ENCODE measurements at regions of chr17 and their contacts with region 1.

Region 1: DNA sequence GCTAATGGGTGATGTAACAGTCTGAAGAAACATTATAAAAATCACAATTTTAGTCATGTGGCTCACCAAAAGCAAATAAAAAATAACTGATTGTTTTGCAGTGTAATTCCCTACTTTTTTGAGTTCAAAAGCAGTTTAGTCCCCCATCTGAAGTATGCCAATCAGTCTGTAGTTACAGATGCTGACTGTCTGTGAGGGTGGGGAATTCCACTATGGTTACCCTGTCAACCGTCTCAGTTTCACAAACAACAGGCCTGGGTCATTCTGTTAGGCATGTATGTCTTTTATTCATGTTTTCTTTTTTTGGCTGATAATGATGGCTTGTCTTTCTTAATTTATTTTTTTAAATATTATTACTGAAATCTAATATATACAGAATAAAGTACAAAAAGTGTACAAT is 69.3 kb downstream of the STXBP4 start:
- DNase-seq: peak in 1 of 9 donors; percentile 32
- ATAC-seq: no peak
- H3K4me3 ChIP-seq: no peak overlapping the region
- H3K4me3 Mint-ChIP-seq: no peak overlapping the region
- H3K27ac ChIP-seq: no peak overlapping the region
- H3K27ac Mint-ChIP-seq: peak overlapping the region in 1 of 9 donors; percentile 25
- H3K4me1 ChIP-seq: no peaks in the 10 kb centered on the region
- H3K4me1 Mint-ChIP-seq: peaks cover 0 to 22% (median 0%) of the 10 kb centered on the region in 7 donors
- H3K27me3 ChIP-seq: no peaks in the 10 kb centered on the region
- H3K27me3 Mint-ChIP-seq: no peaks in the 10 kb centered on the region

Region 2: DNA sequence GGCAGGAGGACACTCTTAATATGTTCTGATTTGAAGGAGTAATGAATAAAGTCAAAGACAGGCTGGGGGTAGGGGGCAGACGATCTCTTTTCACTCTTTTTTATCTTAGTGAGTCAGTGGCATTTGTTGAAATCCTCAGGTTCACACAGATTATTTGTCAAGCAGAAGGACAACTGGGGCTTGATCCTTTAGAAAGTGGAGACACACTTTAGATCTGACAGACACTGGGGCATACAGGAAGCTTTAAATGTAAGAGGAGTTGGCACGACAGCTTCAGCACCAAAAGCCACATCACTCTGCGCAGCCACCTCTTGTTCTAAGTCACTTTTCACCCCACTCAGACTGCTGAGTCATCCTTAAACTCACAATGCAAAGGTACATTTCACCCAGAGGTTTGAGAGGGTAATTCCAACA is 52.3 kb after region 1 on chr17:
- CTCF ChIA-PET with region 1: no interaction called
- POLR2A ChIA-PET with region 1: no interaction called
- intact Hi-C with region 1: loop called in 1 of 2 experiments (anchors 5 kb)
- DNase-seq: peak in 1 of 9 donors; percentile 22
- ATAC-seq: peak; percentile 58
- H3K4me3 ChIP-seq: no peak overlapping the region
- H3K4me3 Mint-ChIP-seq: peak overlapping the region in 1 of 10 donors; percentile 47
- H3K27ac ChIP-seq: no peak overlapping the region
- H3K27ac Mint-ChIP-seq: peak overlapping the region in 2 of 9 donors; percentile 41 to 87
- H3K4me1 ChIP-seq: peaks cover 0 to 25% of the 10 kb centered on the region in 2 donors
- H3K4me1 Mint-ChIP-seq: peaks cover 0 to 22% (median 0%) of the 10 kb centered on the region in 7 donors
- H3K27me3 ChIP-seq: no peaks in the 10 kb centered on the region
- H3K27me3 Mint-ChIP-seq: no peaks in the 10 kb centered on the region

Region 3: DNA sequence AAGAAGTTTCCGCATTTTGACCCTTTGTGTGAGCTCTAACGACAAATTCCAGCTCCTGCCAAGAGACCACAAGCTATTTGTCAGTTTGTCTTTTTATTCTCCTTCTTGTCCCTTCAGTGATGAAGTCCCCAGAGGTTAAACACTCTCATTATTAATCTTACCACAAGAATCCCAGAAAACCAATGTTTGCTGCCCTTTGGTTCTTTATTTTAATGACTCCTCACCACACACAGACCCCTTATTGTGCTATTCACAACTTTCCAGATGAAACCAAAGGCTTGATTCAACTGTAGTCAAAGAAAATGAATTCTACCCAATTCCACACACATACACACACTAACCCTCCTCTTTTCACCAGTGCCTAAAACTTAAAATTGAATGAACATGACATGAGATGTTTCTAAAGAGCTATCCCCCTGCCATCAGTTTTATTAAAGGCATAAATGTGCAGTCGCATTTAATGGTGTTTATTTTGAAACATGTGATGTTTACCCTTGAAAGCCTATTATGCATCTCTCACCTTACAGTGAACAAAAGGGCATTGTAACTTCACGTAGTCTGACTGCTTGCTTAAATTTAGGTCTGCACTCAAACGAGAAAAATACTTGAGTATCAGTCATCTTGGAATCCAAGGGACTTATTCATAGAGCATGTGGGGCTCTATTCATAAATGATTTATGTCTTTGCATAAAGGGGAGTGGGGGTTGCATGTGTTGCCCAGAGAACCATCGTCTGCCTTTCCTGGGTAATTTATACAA is 757.1 kb after region 1 on chr17:
- CTCF ChIA-PET with region 1: no interaction called
- POLR2A ChIA-PET with region 1: no interaction called
- intact Hi-C with region 1: no loop called
- DNase-seq: no peak
- ATAC-seq: no peak
- H3K4me3 ChIP-seq: no peak overlapping the region
- H3K4me3 Mint-ChIP-seq: no peak overlapping the region
- H3K27ac ChIP-seq: no peak overlapping the region
- H3K27ac Mint-ChIP-seq: no peak overlapping the region
- H3K4me1 ChIP-seq: no peaks in the 10 kb centered on the region
- H3K4me1 Mint-ChIP-seq: peaks cover 0 to 6% (median 0%) of the 10 kb centered on the region in 7 donors
- H3K27me3 ChIP-seq: no peaks in the 10 kb centered on the region
- H3K27me3 Mint-ChIP-seq: peaks cover 0 to 17% (median 5%) of the 10 kb centered on the region in 5 donors